Transverse colon (tissue), 4 donors: ENCODE measurements at regions of chr4 and their contacts with region 1.

Region 1: GRCh38 chr4:30553706-30554105 is 166.5 kb upstream of the PCDH7 start:
- DNase-seq: no peak
- H3K4me3 ChIP-seq: no peak overlapping the region
- H3K27ac ChIP-seq: no peak overlapping the region
- H3K4me1 ChIP-seq: no peaks in the 10 kb centered on the region
- H3K27me3 ChIP-seq: no peaks in the 10 kb centered on the region
- CTCF ChIP-seq: no peak
- EP300 ChIP-seq: no peak
- POLR2A ChIP-seq: no peak

Region 2: GRCh38 chr4:29680644-29681043 is 873.1 kb before region 1 on chr4:
- in situ Hi-C with region 1: no loop called
- intact Hi-C with region 1: loop called (anchors 5 kb)
- DNase-seq: no peak
- H3K4me3 ChIP-seq: no peak overlapping the region
- H3K27ac ChIP-seq: no peak overlapping the region
- H3K4me1 ChIP-seq: no peaks in the 10 kb centered on the region
- H3K27me3 ChIP-seq: no peaks in the 10 kb centered on the region
- CTCF ChIP-seq: no peak
- EP300 ChIP-seq: no peak
- POLR2A ChIP-seq: no peak